ENCODE measurements at regions of chr1 and their contacts with region 1.

Region 1: GRCh38 chr1:40143891-40144575 is 17.2 kb upstream of the RLF start:
- DNase-seq: peak in 2 of 3 donors; percentile 18 to 48
- ATAC-seq: peak; percentile 78 to 83
- H3K4me3 ChIP-seq: no peak overlapping the region
- H3K27ac ChIP-seq: no peak overlapping the region
- H3K4me1 ChIP-seq: no peaks in the 10 kb centered on the region
- H3K27me3 ChIP-seq: no peaks in the 10 kb centered on the region

Region 2: GRCh38 chr1:40338745-40339424 is 194.9 kb after region 1 on chr1:
- intact Hi-C with region 1: loop called in 2 of 4 experiments (anchors 2 to 5 kb)
- DNase-seq: peak; percentile 71 to 91 (median 90)
- ATAC-seq: peak; percentile 73 to 79
- H3K4me3 ChIP-seq: no peak overlapping the region
- H3K27ac ChIP-seq: no peak overlapping the region
- H3K4me1 ChIP-seq: no peaks in the 10 kb centered on the region
- H3K27me3 ChIP-seq: no peaks in the 10 kb centered on the region